Colonic mucosa (tissue), 4 donors: ENCODE measurements at regions of chr9 and their contacts with region 1.

Region 1: GRCh38 chr9:135085830-135086546 is 1.5 kb upstream of the OLFM1 start:
- DNase-seq: peak; percentile 79
- H3K4me3 ChIP-seq: no peak overlapping the region
- H3K27ac ChIP-seq: no peak overlapping the region
- H3K4me1 ChIP-seq: peaks cover 12% of the 10 kb centered on the region
- H3K27me3 ChIP-seq: peaks cover 20% of the 10 kb centered on the region
- CTCF ChIP-seq: peak; percentile 89

Region 2: DNA sequence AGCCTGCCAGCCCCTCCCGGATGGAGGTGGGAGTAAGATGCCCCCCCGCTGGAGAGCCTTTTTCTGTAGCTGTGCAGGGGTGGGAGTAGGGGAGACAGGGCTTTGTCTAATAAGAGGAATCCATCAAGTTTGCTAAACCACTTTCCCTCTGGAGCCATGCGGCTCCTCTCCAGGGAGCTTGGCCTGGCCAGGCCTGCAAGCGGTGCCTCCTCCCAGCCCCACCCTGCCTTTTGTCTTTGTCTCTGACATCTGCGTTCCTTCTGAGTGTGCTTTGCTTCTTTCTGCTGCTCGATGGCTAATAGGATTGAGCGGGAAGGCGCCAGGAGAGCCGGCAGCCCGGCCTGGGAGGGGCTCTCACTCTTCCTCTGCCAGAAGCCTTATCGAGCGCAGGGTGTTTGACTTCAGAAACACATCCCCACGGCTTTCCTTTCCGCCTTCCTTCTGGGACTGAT is 141.6 kb before region 1 on chr9:
- intact Hi-C with region 1: no loop called
- DNase-seq: no peak
- H3K4me3 ChIP-seq: no peak overlapping the region
- H3K27ac ChIP-seq: no peak overlapping the region
- H3K4me1 ChIP-seq: no peaks in the 10 kb centered on the region
- H3K27me3 ChIP-seq: no peaks in the 10 kb centered on the region
- CTCF ChIP-seq: no peak

Region 3: GRCh38 chr9:134957165-134957944 is 128.6 kb before region 1 on chr9:
- intact Hi-C with region 1: no loop called
- DNase-seq: no peak
- H3K4me3 ChIP-seq: no peak overlapping the region
- H3K27ac ChIP-seq: no peak overlapping the region
- H3K4me1 ChIP-seq: no peaks in the 10 kb centered on the region
- H3K27me3 ChIP-seq: no peaks in the 10 kb centered on the region
- CTCF ChIP-seq: no peak

Region 4: DNA sequence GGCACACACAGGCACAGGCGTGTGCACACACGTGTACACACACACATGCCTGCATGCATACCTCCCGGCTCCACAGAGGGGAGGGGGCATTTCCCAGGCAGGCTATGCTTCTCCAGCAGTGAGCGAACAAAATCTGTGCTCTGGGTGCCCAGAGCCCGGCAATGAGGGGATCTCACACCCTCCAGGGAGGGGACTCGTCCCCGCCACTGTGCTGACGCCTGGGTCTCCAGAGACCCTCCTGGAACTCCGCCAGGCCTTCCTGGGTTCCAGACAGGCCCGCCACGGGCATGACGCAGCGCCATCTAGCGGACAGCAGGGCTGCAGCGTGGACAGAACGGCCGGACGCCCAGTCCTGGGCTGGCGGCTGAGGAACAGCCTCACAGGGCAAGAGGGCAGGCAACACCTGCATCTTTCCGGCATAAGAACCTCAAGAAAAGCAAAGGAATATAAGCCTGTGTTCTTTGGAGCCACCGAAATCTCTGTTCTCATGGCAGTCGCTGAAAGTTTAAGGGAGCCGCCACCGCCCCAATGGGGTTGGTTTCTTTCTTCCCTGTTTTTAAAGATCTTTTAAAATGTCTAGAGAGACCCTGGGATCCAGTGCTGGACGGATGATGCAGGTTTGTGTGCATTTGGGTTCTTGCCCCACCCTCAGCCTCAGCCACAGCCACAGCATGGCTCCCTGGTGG is 258.0 kb after region 1 on chr9:
- intact Hi-C with region 1: loop called (anchors 2 kb)
- DNase-seq: peak; percentile 56
- H3K4me3 ChIP-seq: no peak overlapping the region
- H3K27ac ChIP-seq: no peak overlapping the region
- H3K4me1 ChIP-seq: no peaks in the 10 kb centered on the region
- H3K27me3 ChIP-seq: no peaks in the 10 kb centered on the region
- CTCF ChIP-seq: peak; percentile 89

Region 5: DNA sequence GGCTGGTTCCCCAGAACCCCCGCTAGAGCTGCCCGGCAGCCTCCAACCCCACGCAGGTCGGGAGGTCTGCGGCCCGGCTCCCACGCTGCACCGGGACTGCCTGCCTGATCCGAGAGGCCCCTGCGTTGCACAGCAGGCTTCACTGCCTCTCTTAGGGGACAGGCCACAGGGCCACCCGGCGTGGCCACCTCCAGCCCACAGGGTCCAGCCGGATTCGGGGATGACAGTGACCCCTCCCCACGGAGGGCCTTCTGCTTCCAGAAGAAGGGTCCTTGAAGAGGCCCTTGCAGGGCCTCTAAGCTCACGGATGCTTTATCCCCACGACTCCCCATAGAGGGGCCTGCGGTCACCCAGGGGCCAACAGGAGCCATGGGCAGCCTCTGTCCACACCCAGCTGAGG is 327.5 kb after region 1 on chr9:
- intact Hi-C with region 1: loop called (anchors 2 kb)
- DNase-seq: no peak
- H3K4me3 ChIP-seq: no peak overlapping the region
- H3K27ac ChIP-seq: no peak overlapping the region
- H3K4me1 ChIP-seq: no peaks in the 10 kb centered on the region
- H3K27me3 ChIP-seq: no peaks in the 10 kb centered on the region
- CTCF ChIP-seq: no peak